Posterior vena cava (tissue), 2 donors: ENCODE measurements at regions of chr7 and their contacts with region 1.

Region 1: GRCh38 chr7:54917613-54918391 is 101.0 kb upstream of the EGFR start:
- DNase-seq: no peak

Region 2: DNA sequence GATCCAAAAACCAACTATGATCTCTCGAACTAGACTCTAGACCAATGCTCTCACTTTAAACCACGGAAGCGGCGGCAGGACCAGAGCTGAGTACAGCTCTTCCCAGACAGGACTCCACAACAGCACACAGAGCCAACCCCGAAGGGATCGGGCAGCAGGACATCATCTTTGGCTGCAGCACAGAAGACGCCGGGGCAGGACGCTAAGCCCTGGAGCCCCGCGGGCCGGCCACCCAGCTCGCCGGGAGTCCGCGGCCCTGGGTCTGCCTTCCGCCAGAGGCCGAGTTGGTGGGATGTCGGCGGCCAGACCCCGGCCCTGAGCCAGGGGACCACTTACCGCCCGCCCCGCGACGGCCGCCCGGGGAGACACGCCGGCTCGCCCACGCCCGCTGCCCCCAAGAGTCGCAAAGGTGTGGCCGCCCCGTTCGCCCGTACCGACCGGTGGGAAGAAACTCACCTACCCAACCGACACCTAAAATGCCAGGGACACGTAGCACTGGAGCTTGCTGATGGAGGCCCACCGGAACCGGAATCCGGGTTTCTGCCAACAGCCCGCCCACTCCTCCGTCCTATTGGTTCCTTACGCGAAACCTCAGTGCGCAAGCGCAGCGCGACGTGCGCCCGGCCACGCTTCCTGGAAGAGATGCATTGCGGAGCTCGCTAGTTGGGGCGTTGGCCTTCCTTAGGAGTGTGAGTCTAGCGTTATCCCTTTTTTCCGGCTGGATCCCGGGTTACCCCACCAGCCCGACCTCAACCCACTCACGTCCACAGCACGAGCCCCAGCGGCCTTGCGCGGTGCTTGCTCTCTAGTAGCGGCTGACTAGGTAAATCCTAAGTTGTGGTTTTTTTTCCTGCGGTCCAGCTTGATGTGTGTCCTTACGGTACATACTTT is 158.9 kb before region 1 on chr7 and contains the start of gene SEC61G:
- intact Hi-C with region 1: no loop called
- DNase-seq: peak; percentile 99
- total RNA-seq, gene SEC61G: 86.4 to 97.0 TPM

Region 3: DNA sequence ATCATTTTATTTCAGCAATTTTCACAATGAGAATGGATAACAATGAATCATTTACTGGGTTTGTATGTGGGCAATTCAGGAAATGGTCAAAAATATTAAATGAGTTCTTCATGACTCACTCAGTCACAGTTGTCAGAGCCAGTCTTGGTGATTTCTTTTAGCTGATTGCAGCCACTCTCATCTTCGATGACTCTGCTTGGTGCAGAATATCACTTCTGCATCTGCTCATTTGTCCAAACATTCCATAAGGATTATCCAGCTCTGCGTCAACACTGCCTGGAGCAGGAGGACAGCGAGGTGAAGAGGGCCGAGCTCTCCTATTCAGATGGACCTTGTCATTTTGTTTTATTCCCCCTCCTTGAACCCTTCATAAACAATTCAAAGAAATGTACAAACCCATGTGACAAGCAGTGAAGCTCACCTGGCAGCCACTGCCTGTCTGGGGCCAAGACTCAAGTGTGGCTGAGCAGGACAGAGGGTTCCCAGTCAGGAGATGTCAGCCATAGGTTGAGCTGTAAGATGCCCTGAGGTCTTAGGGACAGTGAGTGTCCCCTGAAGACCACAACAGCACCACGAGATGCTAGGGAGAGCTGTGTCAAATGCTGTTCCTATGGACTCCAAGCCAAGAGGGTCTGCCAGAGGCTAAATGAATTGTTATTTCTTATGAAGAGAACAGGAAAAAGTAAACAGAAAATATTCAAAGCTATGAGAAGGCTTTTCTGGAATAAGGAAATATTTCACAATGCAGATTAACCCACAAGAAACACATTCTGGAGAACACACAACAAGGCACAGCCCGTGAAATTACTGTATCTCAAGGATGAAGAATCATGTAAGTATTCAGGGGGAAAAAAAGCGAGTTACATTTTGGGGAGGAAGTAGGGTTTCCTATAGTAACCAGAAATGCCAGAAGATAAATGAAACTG is 67.9 kb after region 1 on chr7:
- intact Hi-C with region 1: no loop called
- DNase-seq: no peak

Region 4: GRCh38 chr7:56040734-56041133 is 1122.9 kb after region 1 on chr7:
- intact Hi-C with region 1: loop called in 1 of 2 experiments (anchors 5 kb)
- DNase-seq: no peak